ENCODE measurements at regions of chr14 and their contacts with region 1.

Region 1: GRCh38 chr14:100239840-100240724 is 1.1 kb downstream of the YY1 start:
- DNase-seq: peak; percentile 94
- H3K4me3 ChIP-seq: peak overlapping the region; percentile 72 to 92 (median 86)
- H3K27ac ChIP-seq: peak overlapping the region; percentile 51
- H3K4me1 ChIP-seq: peaks cover 22% of the 10 kb centered on the region
- H3K27me3 ChIP-seq: no peaks in the 10 kb centered on the region
- CTCF ChIP-seq: peak; percentile 40 to 62
- POLR2A ChIP-seq: no peak

Region 2: GRCh38 chr14:99480917-99481744 is 759.0 kb before region 1 on chr14 and contains the start of gene CCNK:
- CTCF ChIA-PET with region 1: no interaction called
- POLR2A ChIA-PET with region 1: no interaction called
- dilution Hi-C with region 1: no loop called
- intact Hi-C with region 1: loop called (anchors 2 kb)
- DNase-seq: peak; percentile 100
- H3K4me3 ChIP-seq: peak within 1 kb of the TSS; percentile 76 to 99 (median 86)
- H3K27ac ChIP-seq: peak within 1 kb of the TSS; percentile 66
- H3K4me1 ChIP-seq: peaks cover 23% of the 10 kb centered on the region
- H3K27me3 ChIP-seq: no peaks in the 10 kb centered on the region
- CTCF ChIP-seq: no peak
- POLR2A ChIP-seq: peak; percentile 79
- total RNA-seq, gene CCNK: 59.3 and 59.6 TPM in 2 replicates

Region 3: DNA sequence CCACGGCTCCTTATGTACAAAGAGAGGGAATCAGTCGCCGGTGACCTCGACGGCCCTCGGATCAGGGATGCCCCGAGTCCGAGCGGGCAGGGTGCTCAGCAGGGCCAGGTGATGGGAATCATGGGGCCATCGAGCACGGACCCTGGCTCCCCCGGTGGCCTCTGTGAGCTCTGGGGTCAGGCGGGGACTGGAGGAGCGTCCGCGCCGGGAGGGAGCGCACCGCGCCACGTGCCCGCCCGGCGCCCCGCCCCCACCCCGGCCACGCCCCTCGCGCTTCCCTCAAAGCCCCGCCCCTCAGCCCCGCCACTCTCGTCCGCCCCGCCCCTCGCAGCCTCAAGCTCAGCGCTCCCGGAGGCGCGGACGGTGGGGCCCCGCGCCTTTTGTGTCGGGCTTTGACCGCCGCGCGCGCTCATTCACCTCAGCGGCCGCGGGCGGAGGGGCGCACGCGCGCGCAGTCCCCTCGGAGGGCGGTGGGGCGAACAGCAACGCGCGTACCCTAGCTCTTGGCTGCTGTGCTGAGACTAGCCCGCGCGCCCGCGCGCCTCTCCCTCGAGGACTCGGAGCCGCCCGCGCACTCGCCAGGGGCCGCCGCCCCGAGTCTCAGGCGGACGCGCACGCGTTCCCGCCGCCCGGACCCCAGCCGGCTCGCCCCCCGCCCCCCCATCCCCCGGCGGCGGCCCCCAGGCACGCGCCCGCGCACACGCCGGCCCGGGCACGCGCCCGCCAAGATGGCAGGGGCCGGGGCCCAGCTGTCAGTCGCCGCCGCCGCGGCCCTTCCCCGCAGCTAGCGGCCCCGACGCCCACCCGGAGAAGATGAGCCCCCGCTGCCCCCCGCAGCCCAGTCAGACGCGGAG is 268.8 kb before region 1 on chr14:
- CTCF ChIA-PET with region 1: interaction called, 4 read pairs
- POLR2A ChIA-PET with region 1: no interaction called
- dilution Hi-C with region 1: no loop called
- intact Hi-C with region 1: loop called (anchors 5 kb)
- DNase-seq: peak; percentile 85
- H3K4me3 ChIP-seq: peak overlapping the region; percentile 47 to 80 (median 49)
- H3K27ac ChIP-seq: no peak overlapping the region
- H3K4me1 ChIP-seq: peaks cover 7% of the 10 kb centered on the region
- H3K27me3 ChIP-seq: peaks cover 10 to 12% of the 10 kb centered on the region in 2 experiments
- CTCF ChIP-seq: no peak
- POLR2A ChIP-seq: peak; percentile 33

Region 4: GRCh38 chr14:100140452-100141078 is 99.5 kb before region 1 on chr14:
- CTCF ChIA-PET with region 1: no interaction called
- POLR2A ChIA-PET with region 1: no interaction called
- dilution Hi-C with region 1: no loop called
- intact Hi-C with region 1: loop called (anchors 5 kb)
- DNase-seq: peak; percentile 81
- H3K4me3 ChIP-seq: no peak overlapping the region
- H3K27ac ChIP-seq: peak overlapping the region; percentile 83
- H3K4me1 ChIP-seq: peaks cover 31% of the 10 kb centered on the region
- H3K27me3 ChIP-seq: no peaks in the 10 kb centered on the region
- CTCF ChIP-seq: peak; percentile 57 to 84
- POLR2A ChIP-seq: no peak

Region 5: GRCh38 chr14:100203949-100204834 is 35.9 kb before region 1 on chr14:
- CTCF ChIA-PET with region 1: no interaction called
- POLR2A ChIA-PET with region 1: no interaction called
- dilution Hi-C with region 1: no loop called
- intact Hi-C with region 1: no loop called
- DNase-seq: no peak
- H3K4me3 ChIP-seq: no peak overlapping the region
- H3K27ac ChIP-seq: no peak overlapping the region
- H3K4me1 ChIP-seq: no peaks in the 10 kb centered on the region
- H3K27me3 ChIP-seq: peaks cover 2 to 4% of the 10 kb centered on the region in 2 experiments
- CTCF ChIP-seq: no peak
- POLR2A ChIP-seq: no peak

Region 6: GRCh38 chr14:100285021-100285912 is 45.2 kb after region 1 on chr14:
- CTCF ChIA-PET with region 1: interaction called, 8 read pairs
- POLR2A ChIA-PET with region 1: no interaction called
- dilution Hi-C with region 1: no loop called
- intact Hi-C with region 1: loop called (anchors 1 kb)
- DNase-seq: peak; percentile 60
- H3K4me3 ChIP-seq: peak overlapping the region; percentile 27 to 88 (median 45)
- H3K27ac ChIP-seq: peak overlapping the region; percentile 67
- H3K4me1 ChIP-seq: peaks cover 2% of the 10 kb centered on the region
- H3K27me3 ChIP-seq: no peaks in the 10 kb centered on the region
- CTCF ChIP-seq: peak; percentile 60 to 93
- POLR2A ChIP-seq: peak; percentile 10

Region 7: GRCh38 chr14:100306420-100307219 is 66.5 kb after region 1 on chr14 and contains the start of gene SLC25A29:
- CTCF ChIA-PET with region 1: no interaction called
- POLR2A ChIA-PET with region 1: no interaction called
- dilution Hi-C with region 1: no loop called
- intact Hi-C with region 1: loop called (anchors 1 kb)
- DNase-seq: peak; percentile 91
- H3K4me3 ChIP-seq: peak within 1 kb of the TSS; percentile 57 to 89 (median 64)
- H3K27ac ChIP-seq: peak within 1 kb of the TSS; percentile 62
- H3K4me1 ChIP-seq: peaks cover 21% of the 10 kb centered on the region
- H3K27me3 ChIP-seq: no peaks in the 10 kb centered on the region
- CTCF ChIP-seq: no peak
- POLR2A ChIP-seq: peak; percentile 84
- total RNA-seq, gene SLC25A29: 108 and 132 TPM in 2 replicates

Region 8: GRCh38 chr14:100554082-100554677 is 314.1 kb after region 1 on chr14:
- CTCF ChIA-PET with region 1: no interaction called
- POLR2A ChIA-PET with region 1: no interaction called
- dilution Hi-C with region 1: no loop called
- intact Hi-C with region 1: no loop called
- DNase-seq: no peak
- H3K4me3 ChIP-seq: no peak overlapping the region
- H3K27ac ChIP-seq: no peak overlapping the region
- H3K4me1 ChIP-seq: no peaks in the 10 kb centered on the region
- H3K27me3 ChIP-seq: no peaks in the 10 kb centered on the region
- CTCF ChIP-seq: no peak
- POLR2A ChIP-seq: no peak

Measured in endothelial cell of umbilical vein (primary cell).